Ascending aorta (tissue), 2 donors: ENCODE measurements at regions of chr1 and their contacts with region 1.

Region 1: GRCh38 chr1:85569122-85569521 is 11.4 kb upstream of the CCN1 start:
- DNase-seq: no peak
- H3K4me3 ChIP-seq: peak overlapping the region in 1 of 2 donors; percentile 12
- H3K27ac ChIP-seq: peak overlapping the region; percentile 73 to 84
- H3K4me1 ChIP-seq: peaks cover 9 to 59% of the 10 kb centered on the region in 2 donors
- H3K27me3 ChIP-seq: no peaks in the 10 kb centered on the region
- CTCF ChIP-seq: no peak

Region 2: DNA sequence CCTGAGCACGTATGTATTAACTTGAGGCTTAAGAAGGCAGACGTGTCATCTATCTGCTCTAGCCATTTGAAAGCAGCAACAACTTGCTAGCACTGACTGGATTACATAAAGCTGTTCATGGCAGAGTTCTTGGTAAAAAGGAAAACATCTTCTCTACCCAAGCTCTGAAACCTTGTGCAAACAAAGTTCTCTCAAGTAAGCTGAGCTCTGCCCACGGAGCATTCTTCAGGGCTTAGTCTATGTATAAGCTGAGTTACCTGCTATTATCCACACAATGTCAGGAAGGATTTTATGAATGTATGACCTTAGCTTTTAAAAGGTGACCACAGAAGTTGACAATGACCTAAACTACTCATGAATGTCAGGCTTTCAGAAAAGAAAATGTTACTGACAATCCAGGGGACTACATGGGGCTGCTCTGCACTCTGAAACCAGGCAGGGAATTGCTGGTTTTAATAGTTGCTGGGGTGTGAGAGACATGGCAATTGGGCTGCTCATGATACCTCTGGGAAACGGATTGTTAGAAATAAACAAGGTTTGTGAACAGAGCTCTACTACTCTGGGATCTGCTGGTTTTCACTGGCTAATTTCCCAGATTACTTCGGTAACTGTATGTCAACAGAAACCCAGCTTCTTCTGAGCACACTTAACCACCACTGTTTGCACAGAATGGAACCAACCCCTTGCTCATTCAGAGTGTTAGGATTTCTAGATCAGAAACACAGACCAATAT is 18.2 kb before region 1 on chr1:
- intact Hi-C with region 1: loop called (anchors 2 kb)
- DNase-seq: no peak
- H3K4me3 ChIP-seq: peak overlapping the region in 1 of 2 donors; percentile 6
- H3K27ac ChIP-seq: peak overlapping the region; percentile 71
- H3K4me1 ChIP-seq: peaks cover 0 to 34% of the 10 kb centered on the region in 2 donors
- H3K27me3 ChIP-seq: no peaks in the 10 kb centered on the region
- CTCF ChIP-seq: no peak